Sigmoid colon (tissue), 7 donors: ENCODE measurements at regions of chr16 and their contacts with region 1.

Region 1: GRCh38 chr16:87853411-87854052 is 15.8 kb downstream of the SLC7A5 start:
- DNase-seq: peak; percentile 98
- H3K4me3 ChIP-seq: peak overlapping the region in 3 of 4 donors; percentile 24 to 34 (median 32)
- H3K27ac ChIP-seq: peak overlapping the region; percentile 72 to 87 (median 84)
- H3K4me1 ChIP-seq: peaks cover 0 to 80% (median 70%) of the 10 kb centered on the region in 4 donors
- H3K27me3 ChIP-seq: no peaks in the 10 kb centered on the region
- CTCF ChIP-seq: no peak
- EP300 ChIP-seq: peak in 3 of 4 donors; percentile 39 to 80 (median 71)
- POLR2A ChIP-seq: peak; percentile 33 to 47

Region 2: DNA sequence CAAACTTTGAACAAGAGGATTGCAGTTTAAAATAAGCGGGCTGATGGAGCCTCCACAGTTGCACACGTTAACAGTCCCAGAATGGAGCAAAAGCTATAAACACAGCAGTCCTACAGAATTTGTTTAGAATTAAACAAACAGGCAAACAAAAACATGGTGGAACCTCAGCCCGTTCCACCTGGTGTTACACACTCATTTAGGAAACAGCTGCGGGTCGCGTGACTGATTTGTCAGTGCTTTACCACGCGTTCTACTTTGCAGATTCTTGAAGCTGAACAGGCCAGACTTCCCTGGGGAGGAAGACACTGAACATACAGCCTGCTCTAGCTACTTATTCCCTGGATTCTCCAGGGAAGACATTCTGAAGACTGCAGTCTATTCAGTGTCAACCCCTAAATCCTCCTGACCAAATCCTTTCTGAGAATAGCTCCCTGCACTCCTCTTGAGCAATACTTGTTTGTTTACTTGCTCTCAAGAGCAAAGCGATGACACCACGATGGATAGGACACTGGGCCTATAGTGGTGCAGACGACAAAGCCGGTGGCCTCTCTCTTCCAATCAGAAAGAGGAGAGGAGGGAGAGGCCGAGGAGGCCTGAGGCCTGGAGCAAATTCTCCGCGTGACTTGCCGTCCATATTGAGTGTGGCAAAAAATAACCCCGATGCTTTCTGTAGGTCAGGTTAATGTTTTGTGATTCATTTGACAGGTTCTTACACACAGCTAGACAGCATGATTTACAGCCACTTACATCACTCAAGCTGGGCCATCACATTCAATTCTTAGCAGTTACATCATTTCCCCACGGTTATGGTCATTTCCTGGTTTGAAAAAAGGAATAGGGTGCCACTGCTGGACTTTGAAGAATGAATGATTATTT is 465.4 kb before region 1 on chr16:
- intact Hi-C with region 1: loop called (anchors 10 kb)
- DNase-seq: peak; percentile 98
- H3K4me3 ChIP-seq: peak overlapping the region in 2 of 4 donors; percentile 13 to 18
- H3K27ac ChIP-seq: peak overlapping the region; percentile 88 to 100 (median 95)
- H3K4me1 ChIP-seq: peaks cover 0 to 44% (median 36%) of the 10 kb centered on the region in 4 donors
- H3K27me3 ChIP-seq: no peaks in the 10 kb centered on the region
- CTCF ChIP-seq: no peak
- EP300 ChIP-seq: peak in 3 of 4 donors; percentile 65 to 81 (median 69)
- POLR2A ChIP-seq: peak; percentile 9 to 44

Region 3: DNA sequence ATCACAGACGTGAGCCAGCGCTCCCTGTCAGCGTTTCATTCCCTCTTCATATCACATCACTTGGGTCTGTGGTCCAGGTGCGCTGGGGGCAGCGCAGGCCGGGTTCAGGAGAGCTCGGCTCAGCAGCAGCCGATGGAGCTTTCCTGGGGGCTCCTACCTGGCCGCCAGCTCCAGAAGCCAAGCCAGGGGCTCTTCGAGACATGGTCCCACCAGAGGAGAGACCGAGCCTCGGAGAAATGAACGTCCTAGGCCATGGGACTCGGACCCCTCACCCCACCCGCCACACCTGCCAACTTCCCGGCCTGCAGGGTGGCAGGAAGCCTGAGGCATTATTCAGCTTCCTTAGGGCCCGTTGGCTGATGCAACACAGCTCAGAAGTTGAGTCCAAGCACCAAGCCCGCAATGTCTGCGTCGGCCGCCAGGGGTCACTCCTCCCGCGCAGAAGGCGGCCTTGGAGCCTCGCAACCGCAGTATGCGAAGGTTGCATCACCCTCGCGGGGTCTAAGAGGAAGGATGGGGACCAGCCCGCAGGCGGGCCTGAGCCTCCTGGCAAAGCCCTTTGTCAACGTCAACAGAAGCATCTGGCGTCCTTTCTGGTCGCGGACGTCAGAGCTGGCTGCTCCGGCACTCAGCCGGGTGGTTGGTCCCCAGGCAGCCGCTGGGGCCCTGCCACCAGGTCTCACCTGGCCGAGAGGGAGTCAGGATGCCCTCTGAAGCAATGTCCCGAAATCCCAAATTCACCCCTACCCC is 74.5 kb before region 1 on chr16:
- intact Hi-C with region 1: loop called (anchors 2 kb)
- DNase-seq: peak; percentile 95
- H3K4me3 ChIP-seq: no peak overlapping the region
- H3K27ac ChIP-seq: peak overlapping the region in 3 of 4 donors; percentile 30 to 64 (median 53)
- H3K4me1 ChIP-seq: peaks cover 0 to 20% (median 14%) of the 10 kb centered on the region in 4 donors
- H3K27me3 ChIP-seq: peaks cover 0 to 5% (median 4%) of the 10 kb centered on the region in 3 donors
- CTCF ChIP-seq: peak; percentile 91 to 96 (median 94)
- EP300 ChIP-seq: peak in 1 of 4 donors; percentile 69
- POLR2A ChIP-seq: no peak

Region 4: DNA sequence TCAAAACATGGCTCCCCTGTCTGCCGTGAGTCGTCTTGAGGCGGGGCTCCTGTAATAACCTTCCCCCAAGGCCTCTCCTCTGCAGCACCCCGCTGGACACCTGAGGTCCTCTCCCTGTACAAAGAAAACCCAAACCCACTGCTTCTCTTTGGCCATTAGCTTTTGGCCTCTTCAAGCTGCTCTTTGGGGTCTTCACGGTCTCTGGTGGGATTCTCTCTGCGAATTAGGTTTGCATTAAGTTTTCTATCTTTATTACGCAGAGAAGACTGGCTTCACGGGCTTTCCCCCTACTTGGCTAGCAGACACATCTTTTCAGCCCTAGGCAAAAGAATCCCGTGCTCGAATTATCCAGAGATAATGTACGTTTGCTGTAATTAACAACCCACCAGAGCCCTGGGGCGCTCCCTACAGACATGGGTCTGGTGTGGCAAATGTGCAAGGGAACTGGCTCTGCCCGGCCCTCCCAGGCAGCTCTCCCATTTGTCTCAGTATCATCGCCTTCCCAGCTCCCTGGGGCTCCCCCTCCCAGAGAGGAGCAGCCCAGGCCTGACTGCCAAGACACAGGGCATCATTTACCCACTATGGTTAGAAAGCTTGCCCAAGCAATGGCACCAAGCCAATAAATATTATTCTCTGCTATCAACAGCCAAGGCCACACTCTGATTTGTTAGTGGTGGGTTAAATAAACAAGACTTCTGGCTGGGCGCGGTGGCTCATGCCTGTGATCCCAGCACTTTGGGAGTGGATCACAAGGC is 63.1 kb before region 1 on chr16:
- intact Hi-C with region 1: loop called (anchors 5 kb)
- DNase-seq: peak; percentile 94
- H3K4me3 ChIP-seq: no peak overlapping the region
- H3K27ac ChIP-seq: peak overlapping the region; percentile 67 to 90 (median 76)
- H3K4me1 ChIP-seq: peaks cover 0 to 42% (median 11%) of the 10 kb centered on the region in 4 donors
- H3K27me3 ChIP-seq: no peaks in the 10 kb centered on the region
- CTCF ChIP-seq: no peak
- EP300 ChIP-seq: peak in 2 of 4 donors; percentile 78 to 81
- POLR2A ChIP-seq: no peak

Region 5: DNA sequence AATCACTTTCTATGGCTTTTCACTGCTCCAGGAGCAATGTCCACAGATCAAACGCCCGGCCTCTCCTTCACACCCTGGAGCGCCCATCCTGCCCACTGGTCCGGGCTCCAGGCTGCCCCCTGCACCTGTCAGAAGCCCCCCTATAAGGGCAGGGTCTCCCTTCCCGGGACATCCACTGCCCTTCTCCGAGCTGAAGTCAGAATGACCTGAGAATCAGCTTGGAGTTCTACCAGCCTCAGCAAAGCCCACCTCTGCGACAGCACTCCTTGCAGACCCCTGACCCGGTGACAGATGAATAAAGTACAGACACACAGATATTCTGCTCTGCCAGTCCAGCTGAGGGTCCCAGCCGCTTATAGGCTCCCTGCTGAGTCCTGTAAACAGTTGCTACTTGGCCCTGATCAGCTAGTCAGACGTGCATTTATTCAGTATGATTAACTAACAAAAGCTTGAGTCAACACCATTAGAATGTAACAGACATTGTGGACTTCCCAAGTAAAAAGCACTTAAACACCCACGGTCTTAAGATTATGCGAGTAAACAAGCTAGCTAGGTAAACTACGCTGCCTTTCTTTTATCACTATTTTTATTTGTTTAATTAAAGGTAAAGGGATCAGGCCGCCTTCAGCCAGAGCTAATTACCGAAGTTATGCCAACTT is 10.9 kb after region 1 on chr16:
- intact Hi-C with region 1: no loop called
- DNase-seq: no peak
- H3K4me3 ChIP-seq: no peak overlapping the region
- H3K27ac ChIP-seq: peak overlapping the region in 3 of 4 donors; percentile 72 to 87 (median 87)
- H3K4me1 ChIP-seq: peaks cover 0 to 79% (median 65%) of the 10 kb centered on the region in 4 donors
- H3K27me3 ChIP-seq: no peaks in the 10 kb centered on the region
- CTCF ChIP-seq: no peak
- EP300 ChIP-seq: no peak
- POLR2A ChIP-seq: no peak

Region 6: DNA sequence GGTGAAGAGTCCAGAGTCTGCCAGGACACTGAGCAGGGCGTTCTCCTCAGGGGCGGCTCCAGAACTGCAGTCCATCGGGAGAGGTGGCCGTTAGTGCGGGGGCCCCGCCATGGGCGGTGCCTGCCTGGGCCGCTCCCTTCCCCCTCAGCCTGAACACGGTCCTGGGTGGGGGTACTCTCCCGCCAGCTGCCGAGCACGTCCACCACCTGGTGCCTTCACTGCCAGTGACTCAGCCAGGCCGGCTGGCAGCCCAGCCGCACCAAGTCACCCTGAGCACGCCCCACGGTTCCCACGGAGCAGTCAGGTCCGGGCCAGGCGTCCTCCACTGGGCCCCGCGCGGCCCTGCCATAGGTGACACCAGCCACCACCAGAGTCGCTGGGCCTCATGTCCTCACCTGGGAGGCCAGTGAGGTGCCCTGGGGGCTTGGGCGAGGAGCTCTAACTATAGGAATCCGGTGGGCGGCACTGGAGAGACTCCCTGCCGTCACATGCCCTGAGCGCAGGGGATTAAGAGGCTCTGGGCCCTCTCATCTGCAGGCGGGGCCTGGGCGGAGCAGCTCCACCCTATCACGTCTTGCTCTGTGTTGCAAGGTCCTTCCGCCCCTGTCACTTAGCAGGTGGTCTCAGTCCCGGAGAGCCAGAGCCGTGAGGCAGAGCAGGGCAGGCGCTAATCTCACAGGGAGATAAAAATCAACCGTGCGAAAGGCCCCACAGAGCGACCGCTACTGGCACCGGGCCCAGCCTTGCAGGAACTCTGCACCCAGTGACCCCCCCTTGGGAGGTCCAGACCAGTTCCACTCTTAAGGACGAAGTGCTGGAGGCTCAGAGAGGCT is 917.1 kb after region 1 on chr16:
- intact Hi-C with region 1: loop called (anchors 10 kb)
- DNase-seq: peak; percentile 94
- H3K4me3 ChIP-seq: peak overlapping the region in 3 of 4 donors; percentile 11 to 38 (median 37)
- H3K27ac ChIP-seq: peak overlapping the region; percentile 89 to 100 (median 96)
- H3K4me1 ChIP-seq: peaks cover 0 to 100% (median 100%) of the 10 kb centered on the region in 4 donors
- H3K27me3 ChIP-seq: no peaks in the 10 kb centered on the region
- CTCF ChIP-seq: no peak
- EP300 ChIP-seq: no peak
- POLR2A ChIP-seq: peak in 1 of 2 donors; percentile 24